ENCODE measurements at regions of chr14 and their contacts with region 1.

Region 1: GRCh38 chr14:91177073-91178034 is 63.5 kb downstream of the DGLUCY start:
- DNase-seq: peak; percentile 81
- H3K4me3 Mint-ChIP-seq: no peak overlapping the region
- H3K27ac Mint-ChIP-seq: peak overlapping the region; percentile 90
- H3K4me1 Mint-ChIP-seq: peaks cover 20% of the 10 kb centered on the region
- H3K27me3 Mint-ChIP-seq: no peaks in the 10 kb centered on the region

Region 2: GRCh38 chr14:91060351-91061055 is 116.9 kb before region 1 on chr14 and contains the start of gene RPS6KA5:
- CTCF ChIA-PET with region 1: interaction called, 21 read pairs
- DNase-seq: peak; percentile 100
- H3K4me3 Mint-ChIP-seq: peak within 1 kb of the TSS; percentile 85
- H3K27ac Mint-ChIP-seq: peak within 1 kb of the TSS; percentile 81
- H3K4me1 Mint-ChIP-seq: peaks cover 63% of the 10 kb centered on the region
- H3K27me3 Mint-ChIP-seq: no peaks in the 10 kb centered on the region

Region 3: DNA sequence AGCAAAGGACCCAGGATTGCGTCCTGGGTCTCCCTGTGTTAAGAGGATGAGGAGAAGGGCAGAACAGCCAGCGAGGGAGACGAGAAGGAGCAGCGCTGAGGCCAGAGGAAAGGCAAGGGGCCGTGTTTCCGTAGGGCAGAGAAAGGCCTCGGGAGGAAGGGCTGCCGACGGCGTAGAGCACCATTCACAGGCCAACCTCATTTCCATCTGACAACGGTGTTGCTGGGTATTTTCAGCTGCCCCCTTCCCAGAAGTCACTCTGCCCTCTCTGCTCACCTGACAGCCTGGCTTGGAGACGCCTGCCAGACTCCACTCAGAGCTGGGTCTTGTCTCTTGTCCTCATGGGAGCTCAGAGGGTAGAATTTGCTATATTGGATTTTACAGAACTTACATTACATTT is 15.7 kb after region 1 on chr14:
- CTCF ChIA-PET with region 1: interaction called, 22 read pairs
- DNase-seq: no peak
- H3K4me3 Mint-ChIP-seq: no peak overlapping the region
- H3K27ac Mint-ChIP-seq: no peak overlapping the region
- H3K4me1 Mint-ChIP-seq: peaks cover 50% of the 10 kb centered on the region
- H3K27me3 Mint-ChIP-seq: no peaks in the 10 kb centered on the region

Region 4: DNA sequence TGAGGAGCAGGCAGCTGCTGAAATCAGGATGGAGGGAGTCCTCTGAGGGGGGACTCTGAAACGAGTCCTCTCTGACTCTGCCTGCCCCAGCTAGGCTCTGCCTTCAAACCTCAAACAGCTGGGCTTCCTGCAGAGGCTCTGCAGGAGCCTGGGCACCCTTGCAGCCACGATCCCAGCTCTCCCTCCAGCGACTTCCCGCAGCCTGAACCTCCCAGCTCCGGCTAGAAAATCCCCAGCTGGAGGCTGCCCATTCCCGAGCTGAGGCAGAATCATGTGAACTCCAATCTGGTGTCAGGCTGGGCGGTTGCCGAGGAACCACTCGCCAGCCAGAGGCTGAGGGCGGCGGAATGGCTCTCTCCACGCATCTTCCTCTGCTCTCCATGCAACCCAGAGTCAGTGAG is 67.1 kb after region 1 on chr14 and contains the start of gene GPR68:
- CTCF ChIA-PET with region 1: interaction called, 70 read pairs
- DNase-seq: peak; percentile 62
- H3K4me3 Mint-ChIP-seq: peak within 1 kb of the TSS; percentile 84
- H3K27ac Mint-ChIP-seq: peak within 1 kb of the TSS; percentile 99
- H3K4me1 Mint-ChIP-seq: peaks cover 96% of the 10 kb centered on the region
- H3K27me3 Mint-ChIP-seq: no peaks in the 10 kb centered on the region

Region 5: GRCh38 chr14:91286530-91286937 is 109.2 kb after region 1 on chr14:
- CTCF ChIA-PET with region 1: interaction called, 229 read pairs
- DNase-seq: peak; percentile 86
- H3K4me3 Mint-ChIP-seq: no peak overlapping the region
- H3K27ac Mint-ChIP-seq: peak overlapping the region; percentile 4
- H3K4me1 Mint-ChIP-seq: peaks cover 19% of the 10 kb centered on the region
- H3K27me3 Mint-ChIP-seq: no peaks in the 10 kb centered on the region